PC-9 (cell line): ENCODE measurements at regions of chr2 and their contacts with region 1.

Region 1: DNA sequence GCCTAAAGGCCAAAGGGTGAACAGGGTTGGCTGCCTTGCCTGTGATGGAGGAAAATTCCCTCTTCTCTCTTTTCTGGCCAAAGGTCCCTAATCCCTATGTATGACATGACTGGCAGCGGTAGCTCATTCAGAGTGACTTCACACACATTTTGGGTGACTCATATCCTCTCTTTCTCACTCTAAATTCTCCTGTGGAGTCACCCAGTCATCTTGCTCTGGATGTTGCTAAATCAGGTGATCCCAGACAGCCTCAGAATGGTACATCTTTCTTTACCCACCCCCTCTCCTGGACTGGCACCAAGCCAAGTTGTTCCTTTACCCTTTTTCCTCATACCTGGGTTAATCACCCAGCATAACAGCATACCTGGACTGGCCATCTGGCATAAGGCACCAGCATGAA is 77.2 kb downstream of the NEURL3 start:
- DNase-seq: peak; percentile 96 to 100
- H3K4me3 ChIP-seq: no peak overlapping the region
- H3K27ac ChIP-seq: peak overlapping the region; percentile 82
- H3K4me1 ChIP-seq: peaks cover 32% of the 10 kb centered on the region
- H3K27me3 ChIP-seq: no peaks in the 10 kb centered on the region
- CTCF ChIP-seq: no peak

Region 2: DNA sequence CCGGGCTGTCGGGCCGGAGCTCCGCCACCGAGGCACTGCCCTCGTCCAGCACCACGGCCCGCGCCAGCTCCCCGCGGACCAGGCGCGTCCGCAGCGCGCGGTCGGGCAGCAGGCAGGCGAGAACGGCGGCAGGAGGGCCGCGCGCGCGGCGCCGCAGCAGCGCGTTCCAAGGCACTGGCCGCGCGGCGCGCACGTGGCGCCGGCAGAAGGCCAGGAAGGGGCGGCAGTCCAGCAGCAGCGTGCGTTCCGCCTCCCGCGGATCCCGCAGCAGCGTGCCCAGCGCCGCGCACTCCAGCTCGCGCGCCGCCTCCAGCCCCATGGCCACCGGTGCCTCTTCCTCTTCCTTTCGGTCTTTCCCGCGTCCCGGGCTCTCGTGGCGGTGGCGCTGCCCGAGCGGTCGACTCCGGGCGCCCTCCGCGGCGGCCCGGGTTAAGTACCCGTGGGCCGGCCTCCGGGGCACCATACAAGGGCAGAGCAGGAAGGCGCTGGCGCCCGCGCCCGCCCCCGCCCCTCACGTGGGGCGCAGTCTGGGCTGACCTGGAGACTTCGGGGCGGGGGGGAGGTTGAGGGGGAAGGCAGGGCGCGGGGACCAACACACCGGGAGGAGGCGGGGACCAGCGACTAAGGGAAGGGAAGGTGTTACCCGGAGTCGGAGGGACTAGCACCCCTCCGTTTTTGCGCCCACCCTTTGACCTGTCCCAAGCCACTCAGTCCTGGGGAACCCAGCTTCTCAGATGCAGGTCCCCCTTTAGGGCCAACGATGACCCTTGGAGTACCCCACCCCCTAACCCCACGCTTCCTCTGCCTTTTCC is 282.7 kb before region 1 on chr2 and contains the start of gene DUSP2:
- CTCF ChIA-PET with region 1: interaction called, 17 read pairs
- POLR2A ChIA-PET with region 1: no interaction called
- intact Hi-C with region 1: no loop called
- DNase-seq: peak; percentile 57 to 82
- H3K4me3 ChIP-seq: peak within 1 kb of the TSS; percentile 73
- H3K27ac ChIP-seq: no peak within 1 kb of the TSS
- H3K4me1 ChIP-seq: peaks cover 13% of the 10 kb centered on the region
- H3K27me3 ChIP-seq: no peaks in the 10 kb centered on the region
- CTCF ChIP-seq: no peak; the same call in 1 of the 2 replicates
- total RNA-seq, gene DUSP2: 4.0 and 5.2 TPM in 2 replicates

Region 3: DNA sequence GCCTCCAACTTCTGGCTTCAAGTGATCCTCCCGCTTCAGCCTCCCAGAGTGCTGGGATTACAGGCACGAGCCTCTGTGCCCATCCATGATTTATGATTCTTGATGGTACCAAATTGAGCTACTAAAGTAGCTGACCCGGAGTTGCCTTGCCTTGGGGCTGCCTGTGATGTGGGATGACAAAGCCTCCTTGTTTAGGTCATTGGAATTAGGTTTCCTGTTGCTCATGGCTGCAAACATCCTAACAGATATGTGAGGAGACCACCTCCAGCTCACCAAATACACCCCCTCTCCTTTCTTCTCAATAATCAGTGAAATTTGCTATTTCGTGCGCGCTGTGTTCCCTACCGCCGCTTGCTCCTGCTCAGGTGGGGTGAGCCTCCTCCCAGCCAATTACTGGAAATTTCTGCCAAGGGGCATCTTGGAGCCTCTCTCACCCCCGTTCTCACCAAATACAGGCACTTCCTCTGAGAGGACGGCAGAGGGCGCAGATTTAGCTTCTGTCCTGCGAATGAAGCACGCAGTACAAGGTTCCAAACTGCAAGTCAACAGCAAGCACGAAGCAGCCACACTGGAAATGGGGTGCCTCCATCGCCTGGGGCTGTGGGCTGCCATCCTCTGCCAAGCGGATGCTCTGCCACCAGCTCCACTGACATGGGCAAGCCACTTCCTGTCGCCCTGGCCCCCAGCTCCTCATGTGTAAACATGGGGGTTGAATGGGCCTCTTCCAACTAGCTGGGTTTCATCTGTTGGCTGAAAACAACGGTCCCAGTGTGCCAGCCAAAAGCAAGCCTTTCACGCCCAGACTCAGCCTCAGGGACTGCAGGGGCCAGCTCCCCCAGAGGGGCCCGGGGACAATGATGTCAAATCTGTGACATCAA is 20.6 kb before region 1 on chr2:
- CTCF ChIA-PET with region 1: interaction called, 3 read pairs
- POLR2A ChIA-PET with region 1: interaction called, 4 read pairs
- intact Hi-C with region 1: loop called (anchors 1 kb)
- DNase-seq: peak; percentile 59 to 71
- H3K4me3 ChIP-seq: no peak overlapping the region
- H3K27ac ChIP-seq: no peak overlapping the region; the same call in 1 of the 2 replicates
- H3K4me1 ChIP-seq: peaks cover 49% of the 10 kb centered on the region
- H3K27me3 ChIP-seq: no peaks in the 10 kb centered on the region
- CTCF ChIP-seq: peak; percentile 95

Region 4: GRCh38 chr2:96413323-96413722 is 14.6 kb before region 1 on chr2:
- CTCF ChIA-PET with region 1: interaction called, 3 read pairs
- POLR2A ChIA-PET with region 1: interaction called, 5 read pairs
- intact Hi-C with region 1: loop called (anchors 1 kb)
- DNase-seq: peak in 1 of 2 experiments; percentile 26
- H3K4me3 ChIP-seq: no peak overlapping the region
- H3K27ac ChIP-seq: no peak overlapping the region
- H3K4me1 ChIP-seq: peaks cover 48% of the 10 kb centered on the region
- H3K27me3 ChIP-seq: no peaks in the 10 kb centered on the region
- CTCF ChIP-seq: no peak

Region 5: GRCh38 chr2:96485751-96486651 is 58.1 kb after region 1 on chr2:
- CTCF ChIA-PET with region 1: interaction called, 3 read pairs
- POLR2A ChIA-PET with region 1: no interaction called
- intact Hi-C with region 1: loop called (anchors 1 kb)
- DNase-seq: peak; percentile 80 to 82
- H3K4me3 ChIP-seq: peak overlapping the region; percentile 26; the same call in 1 of the 2 replicates
- H3K27ac ChIP-seq: peak overlapping the region; percentile 13; the same call in 1 of the 2 replicates
- H3K4me1 ChIP-seq: no peaks in the 10 kb centered on the region
- H3K27me3 ChIP-seq: no peaks in the 10 kb centered on the region
- CTCF ChIP-seq: no peak